Common myeloid progenitor, CD34-positive (primary cell): ENCODE measurements at regions of chr1 and their contacts with region 1.

Region 1: DNA sequence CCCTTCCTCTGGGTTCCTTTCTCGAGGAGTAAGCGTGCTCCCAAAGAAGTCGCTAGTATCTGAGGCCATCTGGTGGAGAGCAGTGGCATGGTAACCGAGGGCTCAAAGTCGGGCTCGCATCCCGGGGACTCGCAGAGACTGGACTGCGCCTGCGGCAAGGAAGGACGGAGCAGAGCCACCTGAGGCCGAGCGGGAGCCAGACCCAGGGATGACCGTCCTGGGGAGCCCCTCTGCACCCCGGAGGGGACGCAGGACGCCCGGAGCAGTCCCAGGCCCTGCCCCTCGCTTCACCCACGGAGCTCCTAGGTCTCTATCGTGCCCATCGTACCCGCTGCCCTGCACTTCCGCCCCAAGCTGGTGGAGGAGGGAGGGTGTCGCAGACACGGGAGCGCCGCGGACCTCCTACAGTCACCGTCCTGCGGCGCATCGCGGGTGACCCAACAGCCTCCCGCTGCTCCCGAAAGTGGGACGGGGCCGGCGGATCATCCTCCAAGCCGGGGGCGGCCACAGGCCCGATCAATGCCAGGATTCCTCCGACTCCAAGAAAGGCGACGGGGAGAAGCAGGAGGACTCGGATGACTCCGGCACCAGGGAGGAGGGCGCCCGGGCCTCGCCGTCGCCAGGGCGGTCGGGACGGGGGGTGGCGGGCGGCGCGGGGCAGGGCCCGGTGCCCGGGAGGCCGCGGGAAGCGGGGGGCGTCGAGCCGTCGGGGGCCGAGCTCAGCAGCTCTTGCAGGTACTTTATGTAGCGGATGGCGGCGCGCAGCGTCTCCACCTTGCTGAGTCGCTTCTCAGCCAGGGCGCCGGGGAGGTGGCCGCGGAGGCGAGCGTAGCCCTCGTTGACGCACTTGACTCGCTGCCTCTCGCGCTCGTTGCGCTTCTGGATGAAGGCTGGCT is 2.3 kb upstream of the CACNA1S start:
- DNase-seq: peak; percentile 90 to 93 (median 93)
- H3K4me3 ChIP-seq: peak overlapping the region; percentile 56 to 80 (median 69)
- H3K27ac ChIP-seq: no peak overlapping the region
- H3K4me1 ChIP-seq: peaks cover 0 to 14% (median 10%) of the 10 kb centered on the region in 4 experiments
- H3K27me3 ChIP-seq: peaks cover 0 to 27% (median 16%) of the 10 kb centered on the region in 5 experiments

Region 2: DNA sequence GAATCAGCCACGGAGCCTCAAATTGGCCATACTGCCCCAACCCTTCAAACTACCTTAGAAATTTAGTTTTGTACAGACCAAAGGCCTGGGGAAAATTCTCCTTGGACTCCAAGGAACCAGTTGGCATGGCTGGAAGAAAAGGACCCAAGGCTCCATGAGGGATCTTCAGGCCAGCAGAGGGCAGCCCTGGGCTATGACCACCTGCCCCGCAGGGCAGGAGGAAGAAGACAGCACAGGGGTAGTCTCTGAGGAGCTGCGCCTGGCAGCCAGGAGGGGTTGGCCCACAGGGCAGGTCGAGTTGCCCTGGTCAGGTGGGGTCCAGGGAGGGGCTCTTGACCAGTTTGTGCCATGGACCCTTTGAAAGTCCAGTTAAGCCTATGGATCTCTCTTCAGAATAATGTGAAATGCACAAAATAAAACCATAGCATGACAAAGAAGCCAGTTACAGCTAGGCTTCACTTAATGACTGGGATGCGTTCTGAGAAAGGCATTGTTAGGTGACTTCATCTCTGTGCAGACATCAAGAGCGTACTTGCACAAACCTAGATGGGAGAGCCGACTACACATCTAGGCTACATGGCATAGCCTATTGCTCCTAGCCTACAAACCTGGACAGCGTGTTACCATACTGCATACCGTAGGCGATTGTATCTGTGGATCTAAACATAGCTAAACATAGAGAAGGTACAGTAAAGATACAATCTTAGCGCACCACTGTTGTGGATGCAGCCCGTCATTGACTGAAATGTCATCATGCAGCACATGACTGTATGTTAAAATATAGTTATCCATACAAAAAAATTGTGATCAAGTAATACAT is 28.4 kb before region 1 on chr1:
- CTCF ChIA-PET with region 1: interaction called, 59 read pairs
- POLR2A ChIA-PET with region 1: no interaction called
- DNase-seq: peak; percentile 45 to 72 (median 68)
- H3K4me3 ChIP-seq: no peak overlapping the region
- H3K27ac ChIP-seq: no peak overlapping the region
- H3K4me1 ChIP-seq: no peaks in the 10 kb centered on the region
- H3K27me3 ChIP-seq: peaks cover 0 to 10% (median 0%) of the 10 kb centered on the region in 5 experiments